GM10248 (cell line): ENCODE measurements at regions of chr14 and their contacts with region 1.

Region 1: GRCh38 chr14:54435500-54435981 is 5.6 kb downstream of the CNIH1 start:
- DNase-seq: peak; percentile 20
- CTCF ChIP-seq: no peak

Region 2: DNA sequence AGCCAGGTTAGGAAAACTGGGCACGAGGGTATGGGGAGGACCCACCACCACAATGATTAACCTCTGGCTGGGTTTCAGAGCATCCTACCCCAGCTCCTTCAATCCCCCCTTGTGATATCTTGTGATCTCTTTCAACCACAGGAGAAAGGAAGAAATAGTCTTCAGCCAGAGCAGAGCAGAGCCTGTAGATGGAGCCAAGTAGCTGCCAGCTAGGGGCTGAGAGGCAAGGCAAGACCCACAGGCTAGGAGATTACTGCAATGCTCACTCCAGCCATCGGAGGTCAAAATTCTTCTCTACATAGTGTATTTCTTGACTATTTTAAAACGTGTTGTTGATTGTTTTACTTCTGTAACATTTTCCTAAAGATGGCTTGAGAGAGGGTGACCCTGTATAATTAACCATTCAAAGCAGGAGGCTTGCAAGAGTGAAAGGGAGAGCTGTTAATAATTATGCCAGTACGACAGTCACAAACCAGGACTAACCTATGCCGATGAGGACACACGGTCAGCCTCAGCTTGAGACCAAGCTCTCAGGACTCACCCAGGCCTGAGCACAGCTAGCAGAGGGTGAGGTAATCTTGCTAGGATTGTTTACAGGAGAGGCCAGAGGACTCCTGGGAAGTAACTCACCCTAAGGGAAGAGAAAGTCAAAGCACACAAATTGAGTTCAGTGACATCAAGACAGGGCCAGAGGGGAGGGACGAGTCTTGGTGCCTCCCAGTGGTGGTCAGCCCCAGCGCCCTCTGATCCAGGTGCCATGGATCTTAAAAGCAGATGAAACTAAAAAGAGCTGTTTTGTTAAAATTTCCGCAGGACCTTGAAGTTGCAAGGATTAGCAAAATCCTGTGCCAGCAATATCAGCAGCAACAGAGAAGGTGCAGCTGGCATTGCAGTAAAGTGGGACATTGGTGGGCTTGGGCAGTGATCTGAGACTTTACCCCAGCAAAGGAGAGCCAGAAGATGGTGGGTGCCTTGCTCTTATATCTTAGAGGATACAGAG is 68.5 kb before region 1 on chr14:
- CTCF ChIA-PET with region 1: no interaction called
- POLR2A ChIA-PET with region 1: no interaction called
- DNase-seq: peak; percentile 28
- CTCF ChIP-seq: peak; percentile 73

Region 3: DNA sequence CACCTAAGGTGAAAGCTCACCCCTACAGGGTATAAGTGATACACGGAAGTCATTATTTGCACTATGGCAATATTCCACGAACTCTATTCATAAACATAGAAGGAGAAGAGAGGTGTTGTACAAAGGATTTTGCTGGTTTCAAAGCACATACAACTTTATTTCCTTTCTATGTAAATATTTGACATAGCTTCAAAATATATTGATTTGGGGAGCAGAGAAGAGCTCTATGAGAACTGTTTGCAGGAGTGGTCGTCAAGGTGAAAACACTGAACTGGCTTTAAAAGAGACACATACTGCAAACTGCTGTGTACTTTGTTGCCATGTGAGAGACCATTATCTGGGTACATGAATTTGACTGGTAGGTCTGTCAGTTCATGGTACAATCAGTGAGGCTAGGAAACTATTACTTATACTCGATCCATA is 11.1 kb before region 1 on chr14:
- CTCF ChIA-PET with region 1: interaction called, 15 read pairs
- POLR2A ChIA-PET with region 1: no interaction called
- DNase-seq: no peak
- CTCF ChIP-seq: no peak

Region 4: DNA sequence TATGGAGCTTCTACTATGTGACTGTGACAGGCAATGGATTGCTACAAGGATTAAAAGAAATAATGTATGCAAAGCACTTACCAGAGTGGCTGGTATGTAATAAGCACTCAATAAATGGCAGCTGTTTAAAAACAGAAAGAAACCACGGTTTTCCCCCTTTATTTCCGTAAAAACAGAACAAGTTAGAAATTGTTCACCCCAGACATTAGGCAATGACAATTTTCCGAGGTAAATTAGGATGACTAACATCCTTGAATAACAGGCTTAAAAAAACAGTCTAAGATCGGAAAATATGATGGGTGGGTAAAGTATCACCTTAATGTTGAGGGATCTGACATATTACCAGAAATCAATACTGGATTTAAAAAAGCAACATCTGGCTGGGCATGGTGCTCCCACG is 26.5 kb after region 1 on chr14:
- CTCF ChIA-PET with region 1: no interaction called
- POLR2A ChIA-PET with region 1: no interaction called
- DNase-seq: no peak
- CTCF ChIP-seq: no peak